ENCODE measurements at regions of chr7 and their contacts with region 1.

Region 1: DNA sequence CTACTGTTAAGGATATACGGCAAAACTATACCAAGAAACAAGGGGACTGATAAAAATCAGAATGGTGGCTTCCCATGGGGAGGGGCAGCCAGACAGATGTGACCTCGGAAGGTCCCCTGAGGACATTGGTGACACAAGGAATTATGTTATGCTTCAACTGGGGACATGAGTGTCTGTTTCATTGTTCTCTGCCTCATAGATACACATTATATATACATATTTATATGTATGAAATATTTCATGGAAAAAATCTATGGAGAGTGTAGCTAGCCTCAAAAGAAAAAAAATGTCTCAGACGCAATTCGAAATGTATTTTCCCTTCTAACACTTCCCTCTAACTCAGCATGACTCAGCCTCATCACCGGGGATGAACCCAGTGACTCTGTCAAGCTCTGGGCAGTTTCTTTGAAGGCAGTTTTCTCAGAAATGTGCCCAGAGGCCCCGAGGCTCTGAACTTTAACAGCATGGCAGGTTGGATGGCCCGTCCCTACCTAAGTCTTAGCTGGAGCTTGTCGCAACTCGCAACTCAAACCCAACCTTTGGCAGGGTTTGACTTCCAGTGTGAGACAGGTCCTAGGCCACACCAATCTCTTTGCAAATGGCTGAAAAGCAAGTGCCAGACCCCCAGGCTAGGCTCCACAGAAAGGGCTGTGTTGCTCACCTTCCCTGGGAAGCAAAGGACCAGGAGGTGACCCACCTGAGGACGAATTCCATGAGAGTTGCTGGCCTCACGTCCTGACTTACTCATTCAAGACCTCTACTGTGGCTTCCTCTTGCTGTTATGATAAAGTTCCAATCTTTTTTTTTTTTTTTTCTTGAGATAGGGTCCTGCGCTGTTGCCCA is 86.9 kb downstream of the CARD11 start:
- DNase-seq: peak in 4 of 14 experiments; percentile 31 to 63 (median 44)
- ATAC-seq: peak; percentile 21
- H3K4me3 ChIP-seq: no peak overlapping the region
- H3K4me3 Mint-ChIP-seq: no peak overlapping the region
- H3K27ac ChIP-seq: no peak overlapping the region
- H3K27ac Mint-ChIP-seq: peak overlapping the region; percentile 74
- H3K4me1 ChIP-seq: peaks cover 47% of the 10 kb centered on the region
- H3K4me1 Mint-ChIP-seq: peaks cover 69% of the 10 kb centered on the region
- H3K27me3 ChIP-seq: no peaks in the 10 kb centered on the region
- H3K27me3 Mint-ChIP-seq: no peaks in the 10 kb centered on the region
- CTCF ChIP-seq: no peak

Region 2: DNA sequence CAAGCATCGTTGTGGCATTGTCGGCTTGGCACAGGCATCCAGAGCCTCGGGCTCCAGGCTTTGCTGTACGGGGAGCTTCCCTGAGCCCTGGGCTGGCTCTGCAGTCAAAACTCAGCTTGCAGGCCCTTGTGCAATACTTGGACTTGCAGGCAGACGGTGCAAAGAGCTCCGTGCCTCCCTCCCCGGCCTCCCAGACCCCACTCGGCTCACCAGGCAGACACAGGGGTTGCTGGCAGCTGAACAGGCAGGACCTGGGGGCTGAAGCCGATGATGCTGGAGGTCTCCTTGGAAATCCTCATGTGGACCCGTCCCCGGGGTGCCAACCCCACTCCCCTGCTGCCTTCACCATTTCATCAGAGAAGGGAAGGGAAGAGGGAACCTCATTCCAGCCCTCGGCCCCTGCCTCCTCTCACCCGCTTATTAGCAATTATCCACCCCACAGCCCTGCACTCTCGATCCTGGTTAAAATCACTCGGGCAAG is 53.0 kb before region 1 on chr7:
- CTCF ChIA-PET with region 1: no interaction called
- POLR2A ChIA-PET with region 1: no interaction called
- intact Hi-C with region 1: no loop called
- DNase-seq: no peak
- ATAC-seq: no peak
- H3K4me3 ChIP-seq: no peak overlapping the region
- H3K4me3 Mint-ChIP-seq: no peak overlapping the region
- H3K27ac ChIP-seq: no peak overlapping the region
- H3K27ac Mint-ChIP-seq: peak overlapping the region; percentile 57
- H3K4me1 ChIP-seq: peaks cover 22% of the 10 kb centered on the region
- H3K4me1 Mint-ChIP-seq: peaks cover 8% of the 10 kb centered on the region
- H3K27me3 ChIP-seq: no peaks in the 10 kb centered on the region
- H3K27me3 Mint-ChIP-seq: no peaks in the 10 kb centered on the region
- CTCF ChIP-seq: no peak

Region 3: GRCh38 chr7:3013975-3014792 is 57.4 kb after region 1 on chr7:
- CTCF ChIA-PET with region 1: no interaction called
- POLR2A ChIA-PET with region 1: interaction called, 4 read pairs
- intact Hi-C with region 1: loop called in 1 of 2 experiments (anchors 10 kb)
- DNase-seq: no peak
- ATAC-seq: no peak
- H3K4me3 ChIP-seq: no peak overlapping the region
- H3K4me3 Mint-ChIP-seq: no peak overlapping the region
- H3K27ac ChIP-seq: no peak overlapping the region
- H3K27ac Mint-ChIP-seq: peak overlapping the region; percentile 44
- H3K4me1 ChIP-seq: peaks cover 39% of the 10 kb centered on the region
- H3K4me1 Mint-ChIP-seq: peaks cover 66% of the 10 kb centered on the region
- H3K27me3 ChIP-seq: no peaks in the 10 kb centered on the region
- H3K27me3 Mint-ChIP-seq: no peaks in the 10 kb centered on the region
- CTCF ChIP-seq: no peak

Region 4: DNA sequence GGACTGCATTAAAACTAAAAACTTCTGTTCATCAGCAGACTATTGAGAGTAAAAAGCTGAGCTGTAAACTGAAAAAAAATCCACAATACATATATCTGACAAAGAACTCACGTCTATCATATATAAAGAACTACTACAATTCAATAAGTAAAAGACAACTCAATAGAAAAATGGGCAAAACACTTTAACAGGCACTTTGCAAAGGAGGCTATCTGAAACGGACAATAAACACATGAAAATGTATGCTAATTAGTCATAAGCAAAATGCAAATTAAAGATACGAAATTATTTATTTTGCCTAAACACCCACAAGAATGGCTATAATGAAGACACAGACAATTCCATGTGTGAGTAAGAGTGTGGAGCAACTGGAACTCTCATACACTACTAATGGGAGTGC is 68.9 kb after region 1 on chr7:
- CTCF ChIA-PET with region 1: no interaction called
- POLR2A ChIA-PET with region 1: no interaction called
- intact Hi-C with region 1: no loop called
- DNase-seq: no peak
- ATAC-seq: no peak
- H3K4me3 ChIP-seq: no peak overlapping the region
- H3K4me3 Mint-ChIP-seq: peak overlapping the region; percentile 15
- H3K27ac ChIP-seq: no peak overlapping the region
- H3K27ac Mint-ChIP-seq: peak overlapping the region; percentile 69
- H3K4me1 ChIP-seq: peaks cover 18% of the 10 kb centered on the region
- H3K4me1 Mint-ChIP-seq: peaks cover 66% of the 10 kb centered on the region
- H3K27me3 ChIP-seq: no peaks in the 10 kb centered on the region
- H3K27me3 Mint-ChIP-seq: no peaks in the 10 kb centered on the region
- CTCF ChIP-seq: no peak

Region 5: GRCh38 chr7:3042861-3043489 is 86.2 kb after region 1 on chr7:
- CTCF ChIA-PET with region 1: interaction called, 3 read pairs
- POLR2A ChIA-PET with region 1: interaction called, 4 read pairs
- intact Hi-C with region 1: loop called (anchors 5 to 10 kb)
- DNase-seq: peak; percentile 23 to 86 (median 66)
- ATAC-seq: peak; percentile 75
- H3K4me3 ChIP-seq: peak overlapping the region; percentile 89
- H3K4me3 Mint-ChIP-seq: peak overlapping the region; percentile 93
- H3K27ac ChIP-seq: peak overlapping the region; percentile 74 to 99
- H3K27ac Mint-ChIP-seq: peak overlapping the region; percentile 85
- H3K4me1 ChIP-seq: peaks cover 60% of the 10 kb centered on the region
- H3K4me1 Mint-ChIP-seq: peaks cover 70% of the 10 kb centered on the region
- H3K27me3 ChIP-seq: no peaks in the 10 kb centered on the region
- H3K27me3 Mint-ChIP-seq: no peaks in the 10 kb centered on the region
- CTCF ChIP-seq: no peak

Measured in CD4-positive, alpha-beta T cell (primary cell).